ENCODE measurements at regions of chr5 and their contacts with region 1.

Region 1: DNA sequence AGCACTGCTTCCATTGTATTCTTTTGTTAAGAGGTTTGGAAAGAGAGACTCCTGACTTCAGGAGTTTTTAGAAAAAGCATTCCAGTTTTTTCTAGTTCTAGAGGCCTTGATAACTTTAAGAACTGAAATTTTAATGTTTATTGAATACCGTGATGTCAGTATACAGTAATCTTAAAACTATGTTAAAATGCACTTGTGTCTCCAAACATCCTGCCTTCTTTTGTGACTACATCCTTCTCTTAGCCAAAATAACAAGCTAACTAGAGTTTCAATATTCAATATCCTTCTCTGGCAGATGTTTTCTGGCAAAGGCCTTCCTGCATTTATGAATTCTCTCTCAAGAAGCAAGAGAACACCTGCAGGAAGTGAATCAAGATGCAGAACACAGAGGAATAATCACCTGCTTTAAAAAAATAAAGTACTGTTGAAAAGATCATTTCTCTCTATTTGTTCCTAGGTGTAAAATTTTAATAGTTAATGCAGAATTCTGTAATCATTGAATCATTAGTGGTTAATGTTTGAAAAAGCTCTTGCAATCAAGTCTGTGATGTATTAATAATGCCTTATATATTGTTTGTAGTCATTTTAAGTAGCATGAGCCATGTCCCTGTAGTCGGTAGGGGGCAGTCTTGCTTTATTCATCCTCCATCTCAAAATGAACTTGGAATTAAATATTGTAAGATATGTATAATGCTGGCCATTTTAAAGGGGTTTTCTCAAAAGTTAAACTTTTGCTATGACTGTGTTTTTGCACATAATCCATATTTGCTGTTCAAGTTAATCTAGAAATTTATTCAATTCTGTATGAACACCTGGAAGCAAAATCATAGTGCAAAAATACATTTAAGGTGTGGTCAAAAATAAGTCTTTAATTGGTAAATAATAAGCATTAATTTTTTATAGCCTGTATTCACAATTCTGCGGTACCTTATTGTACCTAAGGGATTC is 43.1 kb downstream of the NDFIP1 start:
- DNase-seq: peak; percentile 56 to 65 (median 61)
- H3K4me3 ChIP-seq: no peak overlapping the region
- H3K4me3 Mint-ChIP-seq: no peak overlapping the region
- H3K27ac ChIP-seq: no peak overlapping the region
- H3K27ac Mint-ChIP-seq: peak overlapping the region in 2 of 7 donors; percentile 28 to 61
- H3K4me1 ChIP-seq: no peaks in the 10 kb centered on the region
- H3K4me1 Mint-ChIP-seq: peaks cover 0 to 6% (median 4%) of the 10 kb centered on the region in 4 donors
- H3K27me3 ChIP-seq: no peaks in the 10 kb centered on the region
- H3K27me3 Mint-ChIP-seq: no peaks in the 10 kb centered on the region

Region 2: GRCh38 chr5:141800617-141801016 is 351.1 kb before region 1 on chr5:
- CTCF ChIA-PET with region 1: no interaction called
- POLR2A ChIA-PET with region 1: no interaction called
- intact Hi-C with region 1: no loop called
- DNase-seq: no peak
- H3K4me3 ChIP-seq: no peak overlapping the region
- H3K4me3 Mint-ChIP-seq: no peak overlapping the region
- H3K27ac ChIP-seq: no peak overlapping the region
- H3K27ac Mint-ChIP-seq: no peak overlapping the region
- H3K4me1 ChIP-seq: peaks cover 11% of the 10 kb centered on the region
- H3K4me1 Mint-ChIP-seq: peaks cover 2 to 13% (median 4%) of the 10 kb centered on the region in 4 donors
- H3K27me3 ChIP-seq: peaks cover 11% of the 10 kb centered on the region
- H3K27me3 Mint-ChIP-seq: peaks cover 20 to 26% of the 10 kb centered on the region in 2 donors

Region 3: GRCh38 chr5:142221091-142221860 is 69.6 kb after region 1 on chr5:
- CTCF ChIA-PET with region 1: interaction called, 6 read pairs
- POLR2A ChIA-PET with region 1: no interaction called
- intact Hi-C with region 1: loop called (anchors 5 kb)
- DNase-seq: no peak
- H3K4me3 ChIP-seq: no peak overlapping the region
- H3K4me3 Mint-ChIP-seq: no peak overlapping the region
- H3K27ac ChIP-seq: no peak overlapping the region
- H3K27ac Mint-ChIP-seq: peak overlapping the region in 4 of 7 donors; percentile 6 to 58 (median 45)
- H3K4me1 ChIP-seq: peaks cover 32% of the 10 kb centered on the region
- H3K4me1 Mint-ChIP-seq: peaks cover 22 to 44% (median 33%) of the 10 kb centered on the region in 4 donors
- H3K27me3 ChIP-seq: no peaks in the 10 kb centered on the region
- H3K27me3 Mint-ChIP-seq: no peaks in the 10 kb centered on the region

Region 4: DNA sequence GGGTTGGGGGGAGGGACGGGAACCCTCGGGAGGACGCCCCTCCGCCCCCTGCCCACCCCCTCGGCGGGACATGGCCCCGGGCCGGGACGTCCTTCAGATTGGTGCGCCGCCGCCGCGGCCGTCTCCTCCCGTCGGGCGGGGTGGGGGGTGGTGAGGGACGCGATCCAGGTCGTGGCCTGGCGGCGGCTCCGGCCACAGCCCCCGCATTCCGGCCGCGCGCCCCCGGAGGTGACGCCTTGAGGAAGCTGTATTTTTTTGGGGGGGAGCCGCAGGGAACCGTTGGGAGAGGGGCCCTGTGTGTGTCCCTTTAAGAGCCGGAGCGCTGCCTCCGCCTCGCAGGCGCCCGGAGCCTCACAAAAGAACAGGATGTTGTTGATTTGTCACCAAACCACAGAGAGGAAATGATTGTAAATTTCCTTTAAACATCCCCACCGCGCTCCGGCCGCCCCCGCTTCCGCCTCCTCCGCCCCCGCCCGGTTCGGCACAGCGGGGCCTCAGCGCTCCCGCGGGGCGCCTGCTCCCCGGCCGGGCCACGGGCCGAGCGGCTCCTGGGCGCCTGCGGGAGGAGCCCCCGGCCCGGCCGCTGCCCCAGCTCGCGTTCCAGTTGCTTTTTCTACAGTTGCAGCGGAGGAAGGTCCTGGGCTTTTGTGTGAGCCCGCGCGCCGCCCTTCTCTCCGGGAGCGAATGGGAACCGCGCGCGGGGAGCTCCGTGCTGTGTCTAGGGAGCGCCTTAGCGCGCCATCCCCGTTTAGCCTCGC is 205.2 kb after region 1 on chr5:
- CTCF ChIA-PET with region 1: no interaction called
- POLR2A ChIA-PET with region 1: no interaction called
- intact Hi-C with region 1: loop called (anchors 10 kb)
- DNase-seq: peak; percentile 86 to 91 (median 89)
- H3K4me3 ChIP-seq: peak overlapping the region; percentile 38 to 84
- H3K4me3 Mint-ChIP-seq: peak overlapping the region; percentile 88 to 93 (median 89)
- H3K27ac ChIP-seq: peak overlapping the region; percentile 68
- H3K27ac Mint-ChIP-seq: peak overlapping the region; percentile 88 to 95 (median 93)
- H3K4me1 ChIP-seq: peaks cover 47% of the 10 kb centered on the region
- H3K4me1 Mint-ChIP-seq: peaks cover 41 to 67% (median 48%) of the 10 kb centered on the region in 4 donors
- H3K27me3 ChIP-seq: no peaks in the 10 kb centered on the region
- H3K27me3 Mint-ChIP-seq: no peaks in the 10 kb centered on the region

Region 5: DNA sequence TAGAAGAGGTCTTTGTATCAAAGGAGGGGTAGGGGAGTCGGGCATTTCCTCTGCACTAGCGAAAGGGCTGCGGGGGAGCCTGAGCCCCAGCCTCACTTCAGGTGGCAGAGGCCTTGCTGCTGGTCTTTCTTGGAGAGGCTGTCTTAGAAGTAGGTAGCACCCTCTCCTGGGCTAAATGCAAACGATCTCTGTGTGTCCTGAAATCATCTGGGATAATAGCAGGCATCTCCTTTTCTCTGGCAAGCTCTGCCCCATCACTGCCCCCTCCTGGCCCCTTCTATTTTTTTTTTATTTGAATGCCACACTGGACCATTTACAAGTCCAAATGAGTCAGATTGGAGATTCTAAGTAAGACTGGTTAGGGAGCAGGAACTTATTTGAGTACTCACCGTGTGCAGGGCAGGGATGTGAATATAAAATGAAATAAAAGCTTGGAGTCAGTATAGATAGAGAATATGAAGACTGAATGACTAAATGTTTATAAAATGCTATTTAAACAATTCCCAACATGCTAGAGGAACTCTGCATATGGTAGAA is 397.1 kb after region 1 on chr5:
- CTCF ChIA-PET with region 1: interaction called, 21 read pairs
- POLR2A ChIA-PET with region 1: no interaction called
- intact Hi-C with region 1: no loop called
- DNase-seq: peak; percentile 12 to 48 (median 26)
- H3K4me3 ChIP-seq: no peak overlapping the region
- H3K4me3 Mint-ChIP-seq: peak overlapping the region in 1 of 8 donors; percentile 21
- H3K27ac ChIP-seq: no peak overlapping the region
- H3K27ac Mint-ChIP-seq: no peak overlapping the region
- H3K4me1 ChIP-seq: no peaks in the 10 kb centered on the region
- H3K4me1 Mint-ChIP-seq: peaks cover 0 to 20% (median 6%) of the 10 kb centered on the region in 4 donors
- H3K27me3 ChIP-seq: peaks cover 8% of the 10 kb centered on the region
- H3K27me3 Mint-ChIP-seq: peaks cover 13 to 16% of the 10 kb centered on the region in 2 donors

Region 6: GRCh38 chr5:142655339-142656267 is 503.9 kb after region 1 on chr5:
- CTCF ChIA-PET with region 1: interaction called, 9 read pairs
- POLR2A ChIA-PET with region 1: no interaction called
- intact Hi-C with region 1: loop called (anchors 1 kb)
- DNase-seq: peak in 4 of 5 donors; percentile 46 to 62 (median 54)
- H3K4me3 ChIP-seq: no peak overlapping the region
- H3K4me3 Mint-ChIP-seq: no peak overlapping the region
- H3K27ac ChIP-seq: no peak overlapping the region
- H3K27ac Mint-ChIP-seq: no peak overlapping the region
- H3K4me1 ChIP-seq: no peaks in the 10 kb centered on the region
- H3K4me1 Mint-ChIP-seq: peaks cover 0 to 9% (median 3%) of the 10 kb centered on the region in 4 donors
- H3K27me3 ChIP-seq: no peaks in the 10 kb centered on the region
- H3K27me3 Mint-ChIP-seq: peaks cover 4 to 19% of the 10 kb centered on the region in 2 donors

Region 7: GRCh38 chr5:142874537-142874936 is 722.8 kb after region 1 on chr5:
- CTCF ChIA-PET with region 1: interaction called, 3 read pairs
- POLR2A ChIA-PET with region 1: no interaction called
- intact Hi-C with region 1: loop called (anchors 5 kb)
- DNase-seq: no peak
- H3K4me3 ChIP-seq: no peak overlapping the region
- H3K4me3 Mint-ChIP-seq: no peak overlapping the region
- H3K27ac ChIP-seq: no peak overlapping the region
- H3K27ac Mint-ChIP-seq: no peak overlapping the region
- H3K4me1 ChIP-seq: no peaks in the 10 kb centered on the region
- H3K4me1 Mint-ChIP-seq: peaks cover 0 to 3% (median 0%) of the 10 kb centered on the region in 4 donors
- H3K27me3 ChIP-seq: no peaks in the 10 kb centered on the region
- H3K27me3 Mint-ChIP-seq: no peaks in the 10 kb centered on the region